Activated naive CD4-positive, alpha-beta T cell treated with anti-CD3 and anti-CD28 coated beads for 36 hours (primary cell): ENCODE measurements at regions of chr2 and their contacts with region 1.

Region 1: DNA sequence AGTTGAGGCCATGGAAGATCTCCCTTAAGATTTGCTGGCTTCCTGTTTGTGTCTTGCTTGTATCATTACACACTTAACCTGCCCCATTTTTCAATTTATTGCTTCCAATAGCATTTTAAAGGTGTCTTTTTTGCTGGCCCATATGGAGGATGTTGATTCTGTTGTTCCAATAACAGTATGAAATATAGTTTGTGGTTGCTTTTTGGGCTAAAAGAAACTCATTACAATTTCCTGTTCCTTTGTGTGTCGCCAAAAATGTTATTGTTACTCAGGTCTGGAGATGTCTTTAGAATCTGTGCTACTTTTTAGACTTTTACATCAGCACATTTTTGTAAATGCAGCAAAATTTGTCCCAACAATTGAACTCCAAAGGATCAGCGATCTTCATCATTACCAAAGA is 234.0 kb upstream of the ITGA4 start:
- DNase-seq: no peak
- H3K4me3 Mint-ChIP-seq: peak overlapping the region; percentile 59
- H3K27ac Mint-ChIP-seq: peak overlapping the region; percentile 80
- H3K4me1 Mint-ChIP-seq: peaks cover 30% of the 10 kb centered on the region
- H3K27me3 Mint-ChIP-seq: no peaks in the 10 kb centered on the region

Region 2: DNA sequence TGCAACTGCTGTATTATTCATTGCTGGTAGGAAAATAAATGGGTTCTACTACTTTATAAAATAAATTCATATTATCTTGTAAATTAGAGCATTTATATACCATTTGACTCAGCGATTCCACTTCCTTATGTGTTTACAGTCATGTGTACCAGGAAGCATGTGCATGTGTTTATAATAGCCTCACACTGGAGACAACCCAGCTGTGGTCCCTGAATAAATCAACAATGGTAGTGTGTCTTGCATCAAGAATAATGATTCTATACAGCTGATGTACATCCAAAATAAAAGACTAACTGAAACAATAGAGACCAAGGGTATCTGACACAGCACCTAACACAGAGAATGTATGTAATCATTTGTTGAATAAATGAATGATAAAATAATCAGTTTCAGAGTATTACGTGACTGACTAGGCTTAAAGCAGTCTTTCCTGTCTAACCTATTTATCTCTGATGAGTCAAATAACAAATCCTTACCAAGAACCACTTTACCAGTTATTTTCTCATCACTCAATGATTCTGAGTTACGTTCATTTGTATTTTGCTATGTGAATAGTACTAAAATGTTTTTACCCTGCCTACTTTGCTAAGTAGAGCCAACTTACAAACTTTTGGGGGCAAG is 26.0 kb before region 1 on chr2:
- CTCF ChIA-PET with region 1: interaction called, 3 read pairs
- intact Hi-C with region 1: loop called (anchors 1 kb)
- DNase-seq: no peak
- H3K4me3 Mint-ChIP-seq: no peak overlapping the region
- H3K27ac Mint-ChIP-seq: peak overlapping the region; percentile 26
- H3K4me1 Mint-ChIP-seq: peaks cover 38% of the 10 kb centered on the region
- H3K27me3 Mint-ChIP-seq: no peaks in the 10 kb centered on the region

Region 3: GRCh38 chr2:181239201-181239799 is 16.1 kb after region 1 on chr2:
- CTCF ChIA-PET with region 1: interaction called, 3 read pairs
- intact Hi-C with region 1: loop called (anchors 1 kb)
- DNase-seq: peak; percentile 24
- H3K4me3 Mint-ChIP-seq: no peak overlapping the region
- H3K27ac Mint-ChIP-seq: no peak overlapping the region
- H3K4me1 Mint-ChIP-seq: peaks cover 36% of the 10 kb centered on the region
- H3K27me3 Mint-ChIP-seq: no peaks in the 10 kb centered on the region

Region 4: DNA sequence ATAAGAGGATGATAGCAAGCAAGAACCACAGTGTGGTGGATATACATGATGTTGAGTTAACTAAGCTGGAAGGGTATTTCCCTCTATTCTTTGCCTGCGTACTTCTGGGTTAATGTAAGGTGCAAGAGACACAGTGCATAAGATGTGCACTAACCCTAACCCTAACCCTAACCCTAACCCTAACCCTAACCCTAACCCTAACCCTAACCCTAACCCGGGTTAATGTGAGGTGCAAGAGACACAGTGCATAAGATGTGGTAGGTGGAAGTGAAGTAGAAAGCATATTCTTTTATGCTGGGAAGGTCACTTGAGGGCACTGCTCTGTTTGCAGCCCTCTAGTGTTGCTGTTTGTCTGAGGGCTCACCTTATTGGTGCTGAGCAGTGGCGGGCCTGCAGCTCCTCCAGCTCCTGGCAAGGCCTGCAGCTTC is 52.4 kb after region 1 on chr2:
- CTCF ChIA-PET with region 1: no interaction called
- intact Hi-C with region 1: loop called (anchors 2 kb)
- DNase-seq: peak; percentile 18
- H3K4me3 Mint-ChIP-seq: peak overlapping the region; percentile 21
- H3K27ac Mint-ChIP-seq: peak overlapping the region; percentile 59
- H3K4me1 Mint-ChIP-seq: peaks cover 29% of the 10 kb centered on the region
- H3K27me3 Mint-ChIP-seq: no peaks in the 10 kb centered on the region